ENCODE measurements at regions of chr5 and their contacts with region 1.

Region 1: DNA sequence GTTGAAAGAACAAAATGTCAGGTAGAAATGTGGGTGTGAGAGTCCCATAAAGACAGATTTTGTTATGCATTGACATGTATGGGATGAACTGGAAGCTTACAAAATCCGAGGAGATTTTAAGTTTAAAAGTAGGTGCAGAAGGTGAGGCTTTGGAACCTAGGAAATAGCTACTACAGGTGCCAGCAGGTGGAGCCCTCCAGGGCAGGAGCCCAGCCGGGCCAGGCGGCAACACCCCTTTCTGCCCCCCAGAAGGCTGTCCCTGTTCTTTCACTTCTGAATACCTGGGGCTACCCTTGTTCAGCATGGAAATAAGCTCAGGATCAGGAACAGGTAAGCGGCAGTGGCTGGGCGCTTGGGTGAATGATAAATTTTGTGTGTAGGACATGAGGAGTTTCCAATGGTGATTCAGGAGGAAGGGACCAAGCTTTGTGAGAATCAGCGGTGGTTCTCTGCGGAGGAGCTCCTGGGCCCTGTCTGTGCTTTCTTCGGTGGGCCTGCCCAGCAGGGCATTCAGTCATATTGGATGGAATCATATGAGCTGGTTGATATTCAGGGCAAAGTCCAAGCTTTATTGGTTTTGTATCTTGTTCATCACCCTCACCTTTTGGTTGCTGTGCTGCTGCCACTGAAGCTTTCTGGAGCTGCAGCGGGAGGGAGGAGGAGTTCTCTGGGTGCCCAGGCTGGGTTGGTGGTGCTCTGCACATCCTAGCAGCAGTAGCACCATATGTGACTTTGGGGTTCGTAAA is 12.3 kb downstream of the PCBD2 start:
- DNase-seq: no peak
- H3K4me3 ChIP-seq: no peak overlapping the region
- H3K27ac ChIP-seq: no peak overlapping the region
- H3K4me1 ChIP-seq: peaks cover 0 to 3% of the 10 kb centered on the region in 2 experiments; a peak in 1 of 4 replicates
- H3K27me3 ChIP-seq: no peaks in the 10 kb centered on the region
- CTCF ChIP-seq: peak; percentile 32
- EP300 ChIP-seq: no peak
- RAD21 ChIP-seq: peak; percentile 30; the same call in 1 of the 2 replicates

Region 2: GRCh38 chr5:134738133-134738962 is 178.9 kb before region 1 on chr5 and contains the start of gene CAMLG:
- CTCF ChIA-PET with region 1: no interaction called
- POLR2A ChIA-PET with region 1: interaction called, 10 read pairs
- DNase-seq: peak; percentile 94
- H3K4me3 ChIP-seq: peak within 1 kb of the TSS; percentile 76 to 84
- H3K27ac ChIP-seq: peak within 1 kb of the TSS; percentile 82 to 90
- H3K4me1 ChIP-seq: peaks cover 0 to 12% of the 10 kb centered on the region in 2 experiments; a peak in 2 of 4 replicates
- H3K27me3 ChIP-seq: no peaks in the 10 kb centered on the region
- CTCF ChIP-seq: peak; percentile 67
- EP300 ChIP-seq: no peak
- RAD21 ChIP-seq: peak; percentile 44; the same call in 1 of the 2 replicates
- polyA plus RNA-seq, gene CAMLG: 11.9 and 16.9 TPM in 2 replicates